HEK293 (cell line): ENCODE measurements at regions of chr4 and their contacts with region 1.

Region 1: GRCh38 chr4:986879-987623 is at the start of gene IDUA:
- H3K4me3 ChIP-seq: peak within 1 kb of the TSS; percentile 36
- H3K27ac ChIP-seq: no peak within 1 kb of the TSS; the same call in 1 of the 2 replicates
- H3K4me1 ChIP-seq: no peaks in the 10 kb centered on the region
- CTCF ChIP-seq: peak; percentile 78

Region 2: GRCh38 chr4:742742-743311 is 244.2 kb before region 1 on chr4:
- CTCF ChIA-PET with region 1: interaction called, 12 read pairs
- POLR2A ChIA-PET with region 1: no interaction called
- H3K4me3 ChIP-seq: no peak overlapping the region
- H3K27ac ChIP-seq: no peak overlapping the region
- H3K4me1 ChIP-seq: no peaks in the 10 kb centered on the region
- CTCF ChIP-seq: peak; percentile 60; the same call in 1 of the 2 replicates

Region 3: GRCh38 chr4:1099684-1100335 is 112.8 kb after region 1 on chr4:
- CTCF ChIA-PET with region 1: no interaction called
- POLR2A ChIA-PET with region 1: no interaction called
- H3K4me3 ChIP-seq: no peak overlapping the region
- H3K27ac ChIP-seq: no peak overlapping the region
- H3K4me1 ChIP-seq: no peaks in the 10 kb centered on the region
- CTCF ChIP-seq: no peak

Region 4: DNA sequence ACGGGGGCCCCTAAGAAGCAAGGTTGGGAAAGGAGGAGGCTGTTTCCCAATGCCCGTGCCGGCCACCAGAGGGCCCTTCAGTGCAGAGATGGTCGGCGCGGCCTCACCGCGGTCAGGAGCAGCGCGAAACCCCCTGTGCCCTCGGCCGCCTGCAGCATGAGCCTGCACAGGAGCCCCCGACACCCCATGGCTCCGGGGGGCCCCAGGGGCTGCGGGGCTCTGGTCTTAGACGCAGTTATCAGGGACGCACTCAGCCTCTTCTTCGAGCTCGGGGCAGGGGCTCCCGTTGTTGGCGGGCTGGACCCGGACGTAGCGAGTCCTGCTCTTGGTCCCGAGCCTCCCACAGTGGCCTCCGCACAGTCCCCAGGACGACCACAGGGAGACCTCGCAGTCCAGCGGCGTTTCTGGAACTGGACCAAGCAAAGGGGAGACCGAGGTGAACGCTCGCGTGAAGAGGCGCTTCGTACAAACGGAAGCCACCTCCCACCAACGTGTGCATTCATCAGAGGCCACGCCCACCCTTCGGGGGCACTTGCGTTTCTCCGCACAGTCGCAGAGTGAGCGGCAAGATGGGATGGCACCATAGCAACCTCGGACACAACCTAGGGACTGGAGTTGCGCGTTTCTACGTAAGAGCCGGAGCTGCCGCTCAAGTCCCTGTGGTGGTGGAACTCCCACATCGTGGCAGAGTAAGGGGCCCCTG is 180.3 kb after region 1 on chr4:
- CTCF ChIA-PET with region 1: no interaction called
- POLR2A ChIA-PET with region 1: no interaction called
- H3K4me3 ChIP-seq: peak overlapping the region; percentile 38
- H3K27ac ChIP-seq: peak overlapping the region; percentile 38; the same call in 1 of the 2 replicates
- H3K4me1 ChIP-seq: no peaks in the 10 kb centered on the region
- CTCF ChIP-seq: peak; percentile 87